Endothelial cell of umbilical vein (primary cell): ENCODE measurements at regions of chr12 and their contacts with region 1.

Region 1: GRCh38 chr12:111451649-111452129 is 46.0 kb downstream of the SH2B3 start:
- DNase-seq: peak; percentile 68
- H3K4me3 ChIP-seq: no peak overlapping the region
- H3K27ac ChIP-seq: no peak overlapping the region
- H3K4me1 ChIP-seq: peaks cover 19% of the 10 kb centered on the region
- H3K27me3 ChIP-seq: no peaks in the 10 kb centered on the region
- CTCF ChIP-seq: peak; percentile 60 to 66
- POLR2A ChIP-seq: no peak

Region 2: GRCh38 chr12:111201036-111201435 is 250.7 kb before region 1 on chr12:
- CTCF ChIA-PET with region 1: no interaction called
- POLR2A ChIA-PET with region 1: no interaction called
- dilution Hi-C with region 1: no loop called
- intact Hi-C with region 1: no loop called
- DNase-seq: no peak
- H3K4me3 ChIP-seq: no peak overlapping the region
- H3K27ac ChIP-seq: no peak overlapping the region
- H3K4me1 ChIP-seq: no peaks in the 10 kb centered on the region
- H3K27me3 ChIP-seq: no peaks in the 10 kb centered on the region
- CTCF ChIP-seq: no peak
- POLR2A ChIP-seq: no peak

Region 3: GRCh38 chr12:111313833-111314259 is 137.8 kb before region 1 on chr12:
- CTCF ChIA-PET with region 1: no interaction called
- POLR2A ChIA-PET with region 1: no interaction called
- dilution Hi-C with region 1: no loop called
- intact Hi-C with region 1: loop called (anchors 1 kb)
- DNase-seq: peak; percentile 71
- H3K4me3 ChIP-seq: no peak overlapping the region
- H3K27ac ChIP-seq: no peak overlapping the region
- H3K4me1 ChIP-seq: peaks cover 7% of the 10 kb centered on the region
- H3K27me3 ChIP-seq: no peaks in the 10 kb centered on the region
- CTCF ChIP-seq: peak; percentile 94 to 96
- POLR2A ChIP-seq: no peak

Region 4: DNA sequence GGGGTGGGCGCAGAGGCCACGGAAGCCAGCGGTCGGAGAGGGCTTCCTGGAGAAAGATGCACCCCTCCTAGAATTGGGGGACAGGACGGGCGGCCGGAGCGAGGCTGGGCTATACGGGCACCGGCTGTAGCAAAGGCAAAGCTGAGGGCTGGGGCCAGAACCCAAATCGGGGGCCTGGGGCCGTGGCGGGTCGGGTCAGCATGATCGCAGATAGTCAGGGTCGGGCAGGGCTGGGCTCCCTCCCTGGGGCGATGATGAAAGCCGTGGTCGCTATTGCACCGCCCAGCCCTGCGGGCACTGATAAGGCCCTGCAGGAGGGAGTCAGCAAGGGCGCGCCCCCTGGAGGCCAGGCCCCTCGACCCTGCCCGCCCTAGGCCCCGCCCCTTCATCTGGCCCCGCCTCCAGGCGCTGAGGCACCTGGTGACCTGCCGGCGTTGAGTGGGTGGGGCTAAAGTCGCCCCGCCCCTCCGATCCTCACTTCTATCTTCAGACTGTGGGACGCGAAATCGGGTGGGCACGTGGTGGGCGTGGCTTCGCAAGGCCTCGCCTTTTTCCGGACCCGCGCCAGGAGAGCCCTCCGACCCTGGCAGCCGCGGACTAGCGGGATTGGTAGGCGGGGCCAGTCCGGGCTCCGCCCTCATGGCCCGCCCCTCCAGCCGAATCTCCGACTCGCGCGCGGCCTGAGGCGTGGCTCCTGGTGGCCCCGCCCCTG is 46.4 kb before region 1 on chr12:
- CTCF ChIA-PET with region 1: interaction called, 464 read pairs
- POLR2A ChIA-PET with region 1: interaction called, 3 read pairs
- dilution Hi-C with region 1: no loop called
- intact Hi-C with region 1: loop called (anchors 1 kb)
- DNase-seq: peak; percentile 98
- H3K4me3 ChIP-seq: peak overlapping the region in 1 of 3 experiments; percentile 91
- H3K27ac ChIP-seq: peak overlapping the region; percentile 37
- H3K4me1 ChIP-seq: peaks cover 45% of the 10 kb centered on the region
- H3K27me3 ChIP-seq: no peaks in the 10 kb centered on the region
- CTCF ChIP-seq: peak; percentile 50 to 72
- POLR2A ChIP-seq: no peak

Region 5: DNA sequence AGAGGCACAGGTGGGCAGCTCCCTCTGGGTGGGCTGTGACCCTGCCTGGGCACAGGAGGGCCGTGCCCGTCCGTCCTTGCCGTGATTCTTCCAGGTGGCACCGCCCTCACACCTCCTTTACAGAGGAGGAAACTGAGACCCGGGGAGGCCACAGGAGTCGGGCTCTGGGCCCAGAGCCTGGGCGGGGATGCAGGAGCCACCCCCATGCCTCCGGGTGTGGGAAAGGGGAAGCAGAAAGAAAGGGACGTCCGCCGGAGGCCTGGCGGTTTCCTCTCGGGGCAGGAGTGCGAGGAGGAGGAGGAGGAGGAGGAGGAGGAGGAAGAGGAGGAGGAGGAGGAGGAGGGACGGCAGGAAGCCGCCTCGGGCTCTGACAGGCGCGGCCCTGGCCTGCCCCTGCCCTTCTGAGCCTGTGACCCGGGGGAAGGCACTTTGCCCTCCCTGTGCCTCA is 22.9 kb before region 1 on chr12:
- CTCF ChIA-PET with region 1: interaction called, 48 read pairs
- POLR2A ChIA-PET with region 1: no interaction called
- dilution Hi-C with region 1: no loop called
- intact Hi-C with region 1: loop called (anchors 1 kb)
- DNase-seq: peak; percentile 73
- H3K4me3 ChIP-seq: no peak overlapping the region
- H3K27ac ChIP-seq: peak overlapping the region; percentile 72
- H3K4me1 ChIP-seq: peaks cover 86% of the 10 kb centered on the region
- H3K27me3 ChIP-seq: no peaks in the 10 kb centered on the region
- CTCF ChIP-seq: no peak
- POLR2A ChIP-seq: no peak

Region 6: DNA sequence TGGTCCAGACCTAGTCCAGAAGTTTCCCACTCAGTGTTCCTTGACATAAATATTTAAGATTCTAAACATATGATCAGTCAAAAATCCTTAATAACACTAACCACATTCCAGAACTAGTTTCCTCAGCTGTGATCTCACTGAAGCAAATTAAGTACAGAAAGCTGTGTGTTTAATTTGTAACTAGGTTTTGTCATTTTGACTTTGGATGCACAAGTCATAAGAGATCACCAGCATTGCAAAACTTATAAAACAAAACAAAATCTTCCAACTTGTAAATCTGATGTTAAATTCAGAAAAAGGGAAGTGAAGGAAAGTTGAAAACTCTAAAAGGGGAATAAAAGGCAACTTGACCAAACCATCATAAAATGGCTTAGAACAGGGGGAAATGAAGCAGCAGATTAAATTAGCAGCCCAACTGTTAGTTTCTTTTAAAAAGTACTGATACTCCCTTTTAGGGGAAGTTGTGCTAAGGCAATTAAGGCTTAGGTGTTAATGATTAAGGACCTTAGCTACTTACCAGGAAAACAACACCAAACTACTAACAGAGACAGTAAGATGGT is 10.6 kb after region 1 on chr12:
- CTCF ChIA-PET with region 1: interaction called, 23 read pairs
- POLR2A ChIA-PET with region 1: no interaction called
- dilution Hi-C with region 1: no loop called
- intact Hi-C with region 1: no loop called
- DNase-seq: no peak
- H3K4me3 ChIP-seq: no peak overlapping the region
- H3K27ac ChIP-seq: no peak overlapping the region
- H3K4me1 ChIP-seq: no peaks in the 10 kb centered on the region
- H3K27me3 ChIP-seq: no peaks in the 10 kb centered on the region
- CTCF ChIP-seq: no peak
- POLR2A ChIP-seq: no peak

Region 7: GRCh38 chr12:111529424-111530368 is 78.0 kb after region 1 on chr12:
- CTCF ChIA-PET with region 1: interaction called, 3 read pairs
- POLR2A ChIA-PET with region 1: no interaction called
- dilution Hi-C with region 1: no loop called
- intact Hi-C with region 1: loop called (anchors 5 kb)
- DNase-seq: peak; percentile 73
- H3K4me3 ChIP-seq: no peak overlapping the region
- H3K27ac ChIP-seq: no peak overlapping the region
- H3K4me1 ChIP-seq: no peaks in the 10 kb centered on the region
- H3K27me3 ChIP-seq: no peaks in the 10 kb centered on the region
- CTCF ChIP-seq: peak; percentile 69 to 70
- POLR2A ChIP-seq: no peak